Transverse colon (tissue), 4 donors: ENCODE measurements at regions of chr9 and their contacts with region 1.

Region 1: DNA sequence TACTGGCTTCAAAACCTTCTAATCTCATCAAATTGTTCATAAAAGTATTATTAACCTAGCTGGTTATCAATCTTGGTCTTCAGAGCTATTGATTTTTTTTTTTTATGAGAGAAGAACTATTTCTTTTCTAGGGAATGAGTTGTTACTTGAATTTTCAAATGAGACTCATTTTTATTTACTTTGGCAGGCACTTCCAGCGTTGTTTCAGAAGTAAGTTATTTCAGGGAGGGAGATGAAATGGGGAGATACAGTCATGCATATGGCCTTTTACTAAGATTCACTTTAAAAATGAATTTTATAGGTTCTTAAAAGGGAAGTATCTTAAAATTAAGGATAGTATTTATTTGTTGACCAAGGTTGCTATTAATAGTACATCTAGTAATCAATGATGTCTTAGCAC is 129.6 kb downstream of the IZUMO3 start:
- DNase-seq: no peak
- H3K4me3 ChIP-seq: no peak overlapping the region
- H3K27ac ChIP-seq: no peak overlapping the region
- H3K4me1 ChIP-seq: no peaks in the 10 kb centered on the region
- H3K27me3 ChIP-seq: no peaks in the 10 kb centered on the region
- CTCF ChIP-seq: no peak
- EP300 ChIP-seq: no peak
- POLR2A ChIP-seq: no peak

Region 2: DNA sequence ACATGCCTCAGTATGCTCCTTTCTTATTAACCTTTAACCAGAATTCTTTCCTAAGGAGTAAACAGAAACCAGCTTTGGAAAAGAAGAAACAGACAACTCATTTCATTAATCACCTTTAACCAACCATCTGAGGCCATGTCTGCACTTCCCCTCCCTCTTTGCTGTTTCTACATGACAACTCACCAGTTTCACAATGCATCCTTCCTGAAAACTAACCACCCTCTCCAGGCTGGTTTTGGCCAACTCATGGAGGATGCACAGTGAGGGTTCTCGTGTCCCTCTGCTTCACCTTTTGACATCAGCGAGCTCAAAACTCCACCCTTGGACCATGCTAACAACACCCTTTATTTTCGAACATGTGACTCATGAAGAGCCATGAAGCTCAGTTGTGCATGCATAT is 834.2 kb before region 1 on chr9:
- in situ Hi-C with region 1: no loop called
- intact Hi-C with region 1: loop called (anchors 5 kb)
- DNase-seq: no peak
- H3K4me3 ChIP-seq: no peak overlapping the region
- H3K27ac ChIP-seq: no peak overlapping the region
- H3K4me1 ChIP-seq: no peaks in the 10 kb centered on the region
- H3K27me3 ChIP-seq: no peaks in the 10 kb centered on the region
- CTCF ChIP-seq: no peak
- EP300 ChIP-seq: no peak
- POLR2A ChIP-seq: no peak

Region 3: GRCh38 chr9:23914431-23915003 is 501.6 kb before region 1 on chr9:
- in situ Hi-C with region 1: no loop called
- intact Hi-C with region 1: no loop called
- DNase-seq: no peak
- H3K4me3 ChIP-seq: no peak overlapping the region
- H3K27ac ChIP-seq: no peak overlapping the region
- H3K4me1 ChIP-seq: no peaks in the 10 kb centered on the region
- H3K27me3 ChIP-seq: no peaks in the 10 kb centered on the region
- CTCF ChIP-seq: no peak
- EP300 ChIP-seq: no peak
- POLR2A ChIP-seq: no peak

Region 4: DNA sequence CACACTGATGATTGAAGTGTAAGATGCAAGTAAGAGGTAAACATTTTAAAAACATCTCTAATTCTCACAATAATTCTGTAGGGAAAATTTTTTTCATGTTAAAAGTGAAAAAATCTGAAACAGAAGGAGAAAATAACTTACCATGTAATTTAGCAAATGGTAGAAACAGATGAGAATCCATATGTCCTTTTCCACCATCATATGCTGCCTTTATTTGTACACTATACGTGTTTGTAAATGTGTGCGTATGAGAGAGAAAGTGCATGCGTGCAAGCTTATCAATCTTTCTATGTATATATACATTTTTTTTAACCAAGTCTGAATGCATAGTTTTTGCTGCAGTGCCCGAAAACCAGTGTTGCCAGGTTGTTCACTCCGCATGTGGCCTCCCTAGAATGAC is 57.1 kb before region 1 on chr9:
- in situ Hi-C with region 1: loop called in 1 of 4 experiments (anchors 10 kb)
- intact Hi-C with region 1: no loop called
- DNase-seq: no peak
- H3K4me3 ChIP-seq: no peak overlapping the region
- H3K27ac ChIP-seq: no peak overlapping the region
- H3K4me1 ChIP-seq: no peaks in the 10 kb centered on the region
- H3K27me3 ChIP-seq: no peaks in the 10 kb centered on the region
- CTCF ChIP-seq: no peak
- EP300 ChIP-seq: no peak
- POLR2A ChIP-seq: no peak

Region 5: GRCh38 chr9:24624481-24624880 is 208.3 kb after region 1 on chr9:
- in situ Hi-C with region 1: no loop called
- intact Hi-C with region 1: no loop called
- DNase-seq: no peak
- H3K4me3 ChIP-seq: no peak overlapping the region
- H3K27ac ChIP-seq: no peak overlapping the region
- H3K4me1 ChIP-seq: no peaks in the 10 kb centered on the region
- H3K27me3 ChIP-seq: no peaks in the 10 kb centered on the region
- CTCF ChIP-seq: no peak
- EP300 ChIP-seq: no peak
- POLR2A ChIP-seq: no peak